ENCODE measurements at regions of chr5 and their contacts with region 1.

Region 1: DNA sequence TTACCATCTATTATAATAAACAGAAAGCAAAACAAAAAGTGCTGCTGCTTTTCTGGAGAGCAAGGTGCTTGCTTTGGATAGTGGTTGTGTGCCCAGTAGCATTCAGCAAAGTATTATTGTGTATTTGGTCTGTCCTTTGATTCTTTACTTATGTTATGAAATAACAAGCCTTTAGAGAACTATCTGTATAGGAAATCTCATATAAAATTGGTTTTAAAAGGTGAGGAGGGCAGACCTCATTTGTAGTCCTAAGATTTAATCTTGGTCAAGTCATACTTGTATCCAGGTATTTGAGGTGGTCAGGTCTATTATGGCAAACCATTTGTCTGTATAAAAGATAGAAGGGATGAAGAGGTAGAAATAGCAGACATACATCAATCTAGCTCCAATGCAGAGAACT is 53.3 kb downstream of the BDP1 start:
- DNase-seq: no peak
- ATAC-seq: no peak
- H3K4me3 ChIP-seq: no peak overlapping the region
- H3K27ac ChIP-seq: no peak overlapping the region
- H3K4me1 ChIP-seq: no peaks in the 10 kb centered on the region
- H3K27me3 ChIP-seq: no peaks in the 10 kb centered on the region
- CTCF ChIP-seq: no peak

Region 2: GRCh38 chr5:71461360-71461759 is 47.4 kb before region 1 on chr5:
- CTCF ChIA-PET with region 1: no interaction called
- POLR2A ChIA-PET with region 1: interaction called, 13 read pairs
- in situ Hi-C with region 1: no loop called
- intact Hi-C with region 1: no loop called
- DNase-seq: no peak
- ATAC-seq: no peak
- H3K4me3 ChIP-seq: no peak overlapping the region
- H3K27ac ChIP-seq: no peak overlapping the region
- H3K4me1 ChIP-seq: peaks cover 9% of the 10 kb centered on the region; the same call in 1 of the 2 replicates
- H3K27me3 ChIP-seq: no peaks in the 10 kb centered on the region
- CTCF ChIP-seq: no peak